GM10248 (cell line): ENCODE measurements at regions of chr3 and their contacts with region 1.

Region 1: DNA sequence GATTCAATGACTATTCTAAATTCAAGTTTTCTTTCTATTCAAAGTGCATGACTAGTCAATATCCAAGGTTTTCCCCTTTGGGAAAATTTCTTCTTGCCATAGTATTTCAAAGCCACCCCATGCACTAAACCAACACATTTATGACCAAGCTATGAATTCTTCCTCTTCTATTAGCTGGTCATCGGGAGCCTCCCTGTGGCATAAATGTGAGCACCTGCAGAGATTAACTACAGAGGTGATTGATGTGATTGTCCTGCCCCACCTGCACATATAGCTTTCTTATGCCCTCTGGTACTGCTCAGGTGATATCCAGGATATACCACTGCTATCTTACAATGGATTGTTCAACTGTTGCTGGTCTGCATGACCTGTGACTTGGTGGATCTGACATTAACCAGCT is 694.9 kb downstream of the ZBBX start:
- DNase-seq: no peak
- CTCF ChIP-seq: no peak

Region 2: GRCh38 chr3:166669781-166670180 is 15.5 kb before region 1 on chr3:
- CTCF ChIA-PET with region 1: interaction called, 14 read pairs
- POLR2A ChIA-PET with region 1: no interaction called
- DNase-seq: no peak
- CTCF ChIP-seq: no peak